Activated CD4-positive, alpha-beta T cell treated with anti-CD3 and anti-CD28 coated beads for 36 hours (primary cell): ENCODE measurements at regions of chr15 and their contacts with region 1.

Region 1: DNA sequence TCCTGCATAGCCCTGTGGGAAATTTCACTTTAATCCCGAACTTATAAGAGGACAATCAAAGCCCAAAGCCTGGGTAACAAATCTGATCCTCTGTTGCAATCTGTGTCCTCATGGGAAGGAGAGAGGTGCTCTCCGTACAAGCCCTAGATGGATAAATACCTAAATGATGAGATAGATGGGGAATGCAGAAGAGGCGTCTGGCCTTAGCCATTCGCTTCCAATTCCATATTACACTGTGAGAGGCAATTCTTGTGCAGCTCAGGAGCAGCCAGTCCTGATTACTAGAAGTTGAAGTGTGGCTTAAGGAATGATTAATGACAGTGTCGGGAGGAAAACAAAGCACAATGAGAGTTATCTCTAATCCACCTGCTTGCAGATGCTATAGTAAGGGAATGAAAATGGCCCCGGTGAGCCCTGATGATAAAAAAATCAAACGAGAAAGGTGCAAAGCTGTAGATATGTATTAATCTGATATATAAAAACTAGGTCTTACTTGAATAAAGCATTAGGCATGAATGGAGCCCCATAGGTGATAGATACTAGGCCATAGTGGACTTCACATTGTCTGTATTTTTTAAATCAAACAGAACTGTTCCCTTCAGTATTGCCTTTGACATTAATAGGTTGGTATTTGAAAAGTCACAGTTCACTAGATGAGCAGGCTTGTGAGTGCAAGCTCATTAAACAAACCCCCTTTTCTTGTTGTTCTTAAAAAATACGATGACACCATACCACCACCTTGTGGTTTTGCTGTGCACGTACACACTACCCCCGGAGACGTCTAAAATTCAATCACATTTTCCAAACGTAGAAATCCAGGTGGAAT is 54.2 kb upstream of the TMCO5A start:
- DNase-seq: peak; percentile 7
- ATAC-seq: no peak
- H3K4me3 Mint-ChIP-seq: no peak overlapping the region
- H3K27ac Mint-ChIP-seq: no peak overlapping the region
- H3K4me1 Mint-ChIP-seq: no peaks in the 10 kb centered on the region
- H3K27me3 Mint-ChIP-seq: peaks cover 14% of the 10 kb centered on the region

Region 2: GRCh38 chr15:37764733-37765191 is 115.5 kb before region 1 on chr15:
- CTCF ChIA-PET with region 1: interaction called, 3 read pairs
- POLR2A ChIA-PET with region 1: no interaction called
- intact Hi-C with region 1: loop called in 1 of 2 experiments (anchors 2 kb)
- DNase-seq: peak; percentile 48
- ATAC-seq: peak; percentile 79
- H3K4me3 Mint-ChIP-seq: no peak overlapping the region
- H3K27ac Mint-ChIP-seq: no peak overlapping the region
- H3K4me1 Mint-ChIP-seq: peaks cover 5% of the 10 kb centered on the region
- H3K27me3 Mint-ChIP-seq: peaks cover 2% of the 10 kb centered on the region

Region 3: DNA sequence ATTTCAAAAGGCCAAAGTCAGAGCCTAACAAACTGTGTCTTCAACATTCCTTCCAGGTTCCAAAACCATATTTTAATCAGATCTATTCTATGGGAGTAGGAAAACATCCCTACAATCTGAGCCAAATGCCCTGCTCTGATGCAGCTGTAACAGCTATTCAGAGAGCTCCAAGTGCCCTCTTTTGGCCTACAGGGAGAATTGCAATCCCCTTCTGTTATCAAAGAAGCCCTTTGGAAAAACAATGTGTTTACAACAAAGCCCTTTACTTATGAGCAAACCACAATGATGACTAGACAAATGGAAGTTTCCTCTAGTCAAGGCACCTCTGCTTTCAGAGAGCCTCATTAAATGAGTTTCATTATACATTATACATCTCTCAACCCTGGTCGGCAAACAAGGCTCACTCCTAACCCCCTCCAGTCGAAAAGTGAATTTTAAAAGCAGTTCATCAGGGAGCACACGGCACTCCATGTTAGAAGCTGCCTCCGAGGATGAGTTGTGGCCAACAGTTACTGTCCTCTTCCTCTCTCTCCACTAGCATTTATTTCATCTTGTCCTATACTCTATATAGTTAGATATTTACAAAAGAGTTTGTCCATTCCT is 11.6 kb after region 1 on chr15:
- CTCF ChIA-PET with region 1: interaction called, 13 read pairs
- POLR2A ChIA-PET with region 1: no interaction called
- intact Hi-C with region 1: no loop called
- DNase-seq: peak; percentile 4
- ATAC-seq: peak; percentile 39
- H3K4me3 Mint-ChIP-seq: no peak overlapping the region
- H3K27ac Mint-ChIP-seq: no peak overlapping the region
- H3K4me1 Mint-ChIP-seq: no peaks in the 10 kb centered on the region
- H3K27me3 Mint-ChIP-seq: peaks cover 10% of the 10 kb centered on the region